ENCODE measurements at regions of chr11 and their contacts with region 1.

Region 1: GRCh38 chr11:105429096-105429910 is 180.6 kb upstream of the GRIA4 start:
- DNase-seq: no peak
- H3K4me3 ChIP-seq: no peak overlapping the region
- H3K27ac ChIP-seq: no peak overlapping the region
- H3K4me1 ChIP-seq: no peaks in the 10 kb centered on the region
- H3K27me3 ChIP-seq: no peaks in the 10 kb centered on the region
- CTCF ChIP-seq: no peak
- POLR2A ChIP-seq: no peak

Region 2: GRCh38 chr11:105490333-105490732 is 61.0 kb after region 1 on chr11:
- intact Hi-C with region 1: loop called (anchors 5 kb)
- DNase-seq: no peak
- H3K4me3 ChIP-seq: no peak overlapping the region
- H3K27ac ChIP-seq: no peak overlapping the region
- H3K4me1 ChIP-seq: no peaks in the 10 kb centered on the region
- H3K27me3 ChIP-seq: no peaks in the 10 kb centered on the region
- CTCF ChIP-seq: no peak
- POLR2A ChIP-seq: no peak